GM23248 (cell line): ENCODE measurements at regions of chr20 and their contacts with region 1.

Region 1: DNA sequence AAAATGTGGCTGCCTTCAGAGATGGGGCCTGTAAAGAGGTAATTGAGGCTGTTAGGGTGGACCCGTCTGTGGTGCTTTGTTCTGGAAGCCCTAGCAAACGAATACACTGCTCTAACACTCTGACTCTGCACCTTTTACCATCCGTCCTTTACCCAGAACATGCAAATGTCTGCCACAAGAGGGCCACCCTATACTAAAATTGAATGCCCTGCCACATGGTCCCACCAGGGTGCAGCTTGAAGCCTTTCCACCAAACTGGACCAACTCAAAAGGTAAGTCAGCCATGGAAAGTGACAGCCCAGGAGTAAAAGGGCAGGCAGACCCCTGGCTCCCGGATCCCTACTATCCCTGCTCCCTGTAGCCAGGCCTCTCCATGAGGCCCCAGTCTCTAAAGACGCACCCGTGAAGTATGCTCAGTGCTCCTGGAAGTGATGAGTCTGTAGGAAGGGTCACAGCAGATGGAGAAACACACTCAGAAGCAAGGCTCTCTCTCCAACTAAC is 5.8 kb upstream of the BFSP1 start:
- DNase-seq: peak; percentile 87
- H3K4me3 ChIP-seq: no peak overlapping the region
- H3K27ac ChIP-seq: no peak overlapping the region
- H3K4me1 ChIP-seq: peaks cover 8% of the 10 kb centered on the region
- H3K27me3 ChIP-seq: no peaks in the 10 kb centered on the region

Region 2: DNA sequence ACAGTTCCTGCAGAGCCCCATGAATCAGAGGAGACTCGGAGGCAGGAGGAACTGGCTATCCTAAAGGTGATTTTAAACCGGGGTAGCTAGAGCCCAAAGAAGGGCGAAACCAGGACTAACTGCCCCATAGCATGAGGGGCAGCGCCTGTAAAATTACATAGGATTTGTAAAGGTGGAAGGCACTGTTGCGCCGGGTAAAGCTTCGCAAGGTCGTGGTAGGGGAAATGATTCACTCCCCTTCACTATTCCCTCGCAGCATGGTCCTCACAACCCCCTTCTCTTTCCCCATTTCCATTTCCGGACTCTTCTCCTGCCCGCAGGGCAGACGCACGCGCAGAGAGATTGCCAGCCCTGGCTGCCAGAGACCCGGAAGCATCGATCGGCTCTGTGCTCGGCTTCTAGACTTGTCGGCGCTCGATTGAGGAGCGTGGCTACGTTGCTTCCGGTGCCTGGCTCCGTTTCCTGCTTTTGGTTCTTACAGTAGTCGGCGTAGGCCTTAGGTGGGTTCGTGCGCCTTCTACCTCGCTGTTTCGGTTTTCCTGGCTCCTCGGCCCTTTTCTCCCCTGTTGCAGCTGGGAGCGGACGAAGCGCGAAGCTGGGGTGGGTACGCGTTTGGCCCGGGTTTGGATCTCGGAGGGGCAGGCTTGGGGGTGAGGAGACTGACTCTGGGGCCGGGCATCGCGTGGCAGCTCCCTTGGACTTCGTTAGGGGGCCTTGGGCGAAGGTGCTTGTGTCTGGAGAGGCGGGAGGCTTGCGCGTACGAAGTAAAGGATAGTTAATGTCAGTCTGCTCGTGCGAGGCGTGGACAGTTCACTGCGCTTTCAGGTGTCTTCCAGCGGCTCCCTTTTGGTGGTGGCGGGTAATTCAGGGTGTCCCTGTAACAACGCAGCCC is 807.2 kb before region 1 on chr20 and contains the start of gene SNRPB2:
- in situ Hi-C with region 1: no loop called
- DNase-seq: peak; percentile 99
- H3K4me3 ChIP-seq: peak within 1 kb of the TSS; percentile 99
- H3K27ac ChIP-seq: peak within 1 kb of the TSS; percentile 82
- H3K4me1 ChIP-seq: peaks cover 11% of the 10 kb centered on the region
- H3K27me3 ChIP-seq: no peaks in the 10 kb centered on the region; the same call in 1 of the 2 replicates
- total RNA-seq, gene SNRPB2: 47.2 and 69.8 TPM in 2 replicates

Region 3: DNA sequence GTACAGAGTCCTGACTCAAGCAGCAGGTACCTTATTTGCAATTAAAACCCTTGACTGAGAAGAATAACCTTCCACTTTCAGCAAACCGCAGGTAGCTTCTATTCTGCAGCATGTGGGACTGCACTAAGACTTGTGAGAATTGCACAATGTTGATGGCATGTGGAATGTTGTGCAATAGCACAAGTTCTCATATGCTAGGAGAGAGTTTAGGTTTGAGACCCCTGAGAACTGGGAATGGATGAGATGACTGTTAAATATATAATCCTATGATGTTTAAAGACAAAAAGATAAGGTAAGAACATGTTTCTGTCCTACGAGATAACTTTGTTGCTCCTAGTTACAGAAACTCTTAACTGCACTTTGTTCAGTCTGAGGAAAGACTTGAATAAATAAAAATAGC is 594.2 kb before region 1 on chr20:
- in situ Hi-C with region 1: no loop called
- DNase-seq: peak; percentile 48
- H3K4me3 ChIP-seq: no peak overlapping the region
- H3K27ac ChIP-seq: no peak overlapping the region
- H3K4me1 ChIP-seq: 0 out of 2 replicates have a peak, but pooled peaks cover 7% of the 10 kb centered on the region
- H3K27me3 ChIP-seq: no peaks in the 10 kb centered on the region

Region 4: DNA sequence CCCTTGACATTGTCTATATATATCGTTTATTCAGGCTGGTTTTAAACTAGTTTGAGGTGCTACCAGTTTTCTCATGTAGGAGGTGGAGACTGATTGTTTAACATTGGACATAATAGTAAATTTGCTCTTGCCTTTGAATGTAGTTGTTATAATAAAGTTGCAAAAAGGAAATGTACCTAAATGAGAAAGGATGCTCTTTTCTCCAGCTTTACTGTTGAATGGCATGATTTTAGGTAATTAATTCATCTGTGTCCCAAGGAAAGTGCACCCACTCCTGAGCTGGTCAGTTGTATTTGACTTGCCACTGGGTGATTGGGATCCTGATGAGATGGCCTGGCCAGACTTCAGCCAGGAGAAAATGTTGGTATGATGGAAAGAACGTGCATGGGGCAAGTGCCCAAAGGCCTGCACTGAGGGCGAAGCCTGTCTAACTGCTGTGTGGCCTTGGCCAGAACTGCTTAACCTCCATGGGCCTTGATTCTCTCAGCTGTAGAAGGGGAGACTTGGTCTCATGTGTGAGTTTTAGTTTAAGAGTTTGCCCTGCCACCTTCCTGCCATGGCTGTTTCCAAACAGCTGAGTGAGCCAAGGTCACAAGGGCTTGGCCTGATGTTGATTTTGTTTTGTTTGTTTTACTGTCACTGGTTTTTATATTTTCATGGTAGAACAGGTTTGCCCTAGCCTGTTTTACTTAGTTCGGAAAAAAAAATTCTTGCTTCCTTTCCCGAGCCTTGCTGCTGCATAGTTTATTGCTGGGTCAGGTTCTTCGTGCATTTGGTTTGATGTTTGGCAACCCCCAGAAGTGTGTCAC is 68.1 kb after region 1 on chr20:
- in situ Hi-C with region 1: loop called (anchors 10 kb)
- DNase-seq: no peak
- H3K4me3 ChIP-seq: no peak overlapping the region
- H3K27ac ChIP-seq: no peak overlapping the region
- H3K4me1 ChIP-seq: no peaks in the 10 kb centered on the region
- H3K27me3 ChIP-seq: no peaks in the 10 kb centered on the region

Region 5: DNA sequence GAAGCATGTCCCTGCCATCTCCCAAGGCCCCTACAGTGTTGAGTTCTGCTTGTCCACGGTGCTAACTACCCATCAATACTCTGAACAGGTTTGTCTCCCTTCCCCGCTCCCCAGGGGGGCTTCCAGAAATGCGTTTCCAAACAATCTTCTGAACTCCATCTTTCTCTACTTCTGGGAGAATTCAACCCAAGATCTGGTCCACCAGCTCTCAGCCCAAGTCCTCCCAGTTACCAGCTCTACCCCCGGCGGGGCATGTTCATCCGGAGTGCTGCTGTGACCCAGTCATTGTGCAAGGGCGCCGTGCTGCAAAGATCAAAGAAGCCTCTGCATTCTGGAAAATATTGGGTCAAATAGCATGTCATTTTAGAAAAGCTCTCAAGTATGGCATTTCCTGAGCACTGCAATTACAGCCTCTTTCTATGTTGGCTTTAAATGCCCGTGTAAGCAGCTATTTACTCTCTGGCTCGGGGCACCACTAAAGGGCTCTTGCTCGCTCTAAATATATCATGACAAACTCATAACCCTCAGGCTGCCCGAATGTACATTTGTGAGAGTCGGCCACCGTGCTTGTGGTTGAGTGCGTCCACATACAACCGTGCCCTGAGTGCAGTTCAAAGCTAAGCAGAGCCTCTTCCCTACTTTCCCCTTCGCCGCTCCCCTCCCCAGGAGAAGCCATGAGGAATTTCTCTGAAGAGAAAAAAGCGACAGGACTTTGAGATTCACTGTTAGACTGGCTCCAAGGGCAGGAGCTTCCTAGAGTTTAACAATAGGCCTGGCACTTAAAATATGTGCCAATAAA is 234.4 kb after region 1 on chr20:
- in situ Hi-C with region 1: no loop called
- DNase-seq: no peak
- H3K4me3 ChIP-seq: no peak overlapping the region
- H3K27ac ChIP-seq: no peak overlapping the region
- H3K4me1 ChIP-seq: no peaks in the 10 kb centered on the region
- H3K27me3 ChIP-seq: no peaks in the 10 kb centered on the region

Region 6: DNA sequence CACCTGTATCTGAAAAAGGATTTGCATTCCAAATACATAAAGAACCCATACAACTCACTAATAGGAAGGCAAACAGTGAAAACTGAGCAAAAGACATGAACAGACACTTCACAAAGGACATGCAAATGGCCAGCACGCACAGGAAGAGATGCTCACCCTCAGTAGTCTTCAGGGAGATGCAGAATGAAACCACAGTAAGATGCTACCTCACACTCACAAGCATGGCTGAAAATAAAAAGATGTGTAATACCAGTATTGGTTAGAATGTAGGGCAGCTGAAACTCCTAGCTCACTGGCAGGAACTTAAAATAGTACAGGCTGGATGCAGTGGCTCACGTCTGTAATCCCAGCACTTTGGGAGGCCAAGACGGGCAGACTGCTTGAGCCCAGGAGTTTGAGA is 367.0 kb after region 1 on chr20:
- in situ Hi-C with region 1: loop called (anchors 10 kb)
- DNase-seq: no peak
- H3K4me3 ChIP-seq: no peak overlapping the region
- H3K27ac ChIP-seq: no peak overlapping the region
- H3K4me1 ChIP-seq: no peaks in the 10 kb centered on the region
- H3K27me3 ChIP-seq: no peaks in the 10 kb centered on the region